ENCODE measurements at regions of chr2 and their contacts with region 1.

Region 1: GRCh38 chr2:170715062-170715931 is at the start of gene SP5:
- DNase-seq: peak; percentile 85
- H3K4me3 ChIP-seq: peak within 1 kb of the TSS; percentile 27 to 58 (median 50)
- H3K27ac ChIP-seq: peak within 1 kb of the TSS; percentile 25 to 61 (median 50)
- H3K4me1 ChIP-seq: peaks cover 0 to 55% (median 48%) of the 10 kb centered on the region in 4 donors
- H3K27me3 ChIP-seq: peaks cover 47 to 97% (median 80%) of the 10 kb centered on the region in 3 donors
- CTCF ChIP-seq: no peak
- EP300 ChIP-seq: no peak
- POLR2A ChIP-seq: no peak
- total RNA-seq, gene SP5: 0.81 to 4.6 (median 2.0) TPM

Region 2: GRCh38 chr2:170191166-170191866 is 524.0 kb before region 1 on chr2:
- intact Hi-C with region 1: no loop called
- DNase-seq: no peak
- H3K4me3 ChIP-seq: no peak overlapping the region
- H3K27ac ChIP-seq: no peak overlapping the region
- H3K4me1 ChIP-seq: no peaks in the 10 kb centered on the region
- H3K27me3 ChIP-seq: no peaks in the 10 kb centered on the region
- CTCF ChIP-seq: no peak
- EP300 ChIP-seq: no peak
- POLR2A ChIP-seq: no peak

Region 3: DNA sequence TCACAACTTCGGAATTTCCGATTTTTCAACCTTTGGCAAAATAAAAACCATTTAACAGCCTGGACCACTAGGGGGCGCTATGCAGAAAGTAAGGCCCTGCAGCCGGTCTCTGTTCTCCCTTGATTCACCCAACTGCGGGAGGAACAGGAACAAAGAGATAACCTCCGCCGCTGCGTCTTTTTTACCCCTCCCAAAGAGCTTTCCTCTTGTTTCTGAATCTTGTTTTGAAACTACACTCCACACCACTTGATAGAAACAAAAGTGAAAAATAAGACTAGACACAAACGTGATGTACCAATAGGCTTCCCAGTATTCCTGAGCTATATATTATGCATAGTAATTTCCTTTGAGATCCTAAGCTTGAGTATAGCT is 306.1 kb before region 1 on chr2:
- intact Hi-C with region 1: loop called (anchors 2 kb)
- DNase-seq: peak; percentile 84
- H3K4me3 ChIP-seq: no peak overlapping the region
- H3K27ac ChIP-seq: no peak overlapping the region
- H3K4me1 ChIP-seq: peaks cover 0 to 6% (median 4%) of the 10 kb centered on the region in 4 donors
- H3K27me3 ChIP-seq: peaks cover 0 to 10% (median 0%) of the 10 kb centered on the region in 3 donors
- CTCF ChIP-seq: peak; percentile 43 to 81 (median 74)
- EP300 ChIP-seq: no peak
- POLR2A ChIP-seq: no peak

Region 4: DNA sequence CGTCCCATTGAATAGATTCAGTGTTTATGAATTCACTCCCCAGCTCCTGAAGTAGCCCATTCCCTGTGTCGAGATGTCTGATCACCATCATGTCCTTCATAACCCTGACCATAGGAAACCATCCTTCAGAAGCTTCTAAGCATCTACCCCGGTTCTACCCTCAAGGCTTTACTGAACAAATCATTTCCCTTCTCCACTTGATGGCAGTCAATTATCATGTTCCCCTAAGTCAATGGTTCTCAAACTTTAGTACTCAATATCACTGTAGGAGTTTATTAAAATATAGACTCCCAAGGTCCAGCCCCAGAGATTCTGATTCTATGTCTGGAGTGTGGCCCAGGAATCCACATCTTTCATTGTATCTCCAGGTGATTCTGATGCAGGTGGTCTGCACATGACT is 228.6 kb before region 1 on chr2:
- intact Hi-C with region 1: no loop called
- DNase-seq: no peak
- H3K4me3 ChIP-seq: no peak overlapping the region
- H3K27ac ChIP-seq: no peak overlapping the region
- H3K4me1 ChIP-seq: no peaks in the 10 kb centered on the region
- H3K27me3 ChIP-seq: no peaks in the 10 kb centered on the region
- CTCF ChIP-seq: no peak
- EP300 ChIP-seq: no peak
- POLR2A ChIP-seq: no peak

Region 5: DNA sequence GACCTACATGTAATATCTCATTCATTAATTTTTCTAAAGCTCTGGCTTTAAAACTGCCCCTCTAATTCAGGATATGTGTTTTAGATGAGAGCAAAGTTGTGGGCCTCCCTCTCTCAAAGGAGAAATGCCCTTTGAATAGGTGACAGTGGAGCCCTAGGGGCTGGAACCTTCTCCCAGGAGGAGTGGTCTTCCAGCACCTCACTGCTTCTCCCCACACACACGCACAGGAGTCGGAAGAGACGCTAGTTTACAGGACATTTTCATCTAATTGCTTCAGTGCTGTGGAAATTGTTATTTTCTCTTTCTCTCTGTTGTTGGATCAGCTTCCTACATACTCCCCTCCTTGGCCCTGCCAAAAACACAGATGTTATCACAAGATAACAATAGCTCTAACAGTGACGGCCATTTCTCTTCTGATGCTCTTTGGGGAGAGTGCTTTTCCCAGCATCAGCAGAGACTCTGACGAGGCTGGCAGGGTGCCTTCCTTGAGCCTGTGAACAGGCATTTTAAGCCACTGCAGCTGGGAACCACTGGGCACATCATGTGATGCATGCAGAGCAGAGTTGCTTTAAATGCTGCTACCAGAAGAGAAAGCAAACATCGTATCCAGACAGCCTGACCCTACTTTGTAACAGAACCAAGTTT is 209.5 kb before region 1 on chr2:
- intact Hi-C with region 1: loop called (anchors 5 kb)
- DNase-seq: peak; percentile 94
- H3K4me3 ChIP-seq: peak overlapping the region in 3 of 4 donors; percentile 0 to 22 (median 4)
- H3K27ac ChIP-seq: peak overlapping the region; percentile 27 to 70 (median 44)
- H3K4me1 ChIP-seq: peaks cover 0 to 41% (median 20%) of the 10 kb centered on the region in 4 donors
- H3K27me3 ChIP-seq: no peaks in the 10 kb centered on the region
- CTCF ChIP-seq: no peak
- EP300 ChIP-seq: no peak
- POLR2A ChIP-seq: no peak

Region 6: GRCh38 chr2:170598067-170598395 is 117.3 kb before region 1 on chr2:
- intact Hi-C with region 1: loop called (anchors 5 kb)
- DNase-seq: peak; percentile 81
- H3K4me3 ChIP-seq: no peak overlapping the region
- H3K27ac ChIP-seq: peak overlapping the region; percentile 22 to 61 (median 38)
- H3K4me1 ChIP-seq: peaks cover 0 to 24% (median 6%) of the 10 kb centered on the region in 4 donors
- H3K27me3 ChIP-seq: no peaks in the 10 kb centered on the region
- CTCF ChIP-seq: no peak
- EP300 ChIP-seq: no peak
- POLR2A ChIP-seq: no peak

Region 7: DNA sequence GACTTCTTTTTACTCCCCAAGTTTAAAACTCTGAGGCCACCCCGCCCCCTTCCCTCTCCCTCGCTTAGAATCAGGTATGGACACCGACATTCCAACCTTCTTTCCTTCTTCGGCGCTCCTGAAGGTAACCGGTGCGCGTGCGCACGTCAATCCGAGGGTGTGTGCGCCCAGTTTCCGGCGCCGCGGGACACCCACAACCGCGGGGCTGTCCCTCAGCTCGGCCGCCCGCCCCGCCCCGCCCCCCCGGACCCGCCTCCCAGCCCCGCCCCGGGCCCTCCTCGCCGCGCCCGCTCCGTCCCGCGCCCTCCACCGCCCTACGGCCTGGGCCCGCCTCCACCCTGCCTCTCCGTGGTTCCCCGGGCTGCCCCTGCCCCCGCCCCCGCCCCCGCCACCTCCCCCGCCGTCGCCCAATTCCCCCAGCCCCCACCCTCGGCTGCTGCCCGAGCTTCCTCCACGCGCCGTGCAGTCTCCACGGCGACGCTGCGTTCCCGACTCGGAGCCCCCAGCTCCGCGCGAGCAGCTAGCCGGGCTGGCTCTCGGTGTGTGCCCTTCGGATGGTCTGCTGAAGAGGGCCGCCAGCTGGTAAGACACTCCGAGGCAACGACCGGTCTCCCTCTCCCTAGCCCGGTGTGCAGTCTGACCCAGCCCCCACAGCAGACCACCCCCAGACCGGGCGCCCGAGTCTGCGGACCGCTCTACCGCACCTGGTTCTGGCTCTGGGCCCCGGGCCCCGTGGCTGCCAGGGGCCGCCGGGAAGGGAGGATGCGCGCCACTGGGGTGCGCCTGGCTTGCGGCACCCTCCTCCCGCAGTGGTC is 55.5 kb after region 1 on chr2:
- intact Hi-C with region 1: loop called (anchors 2 kb)
- DNase-seq: peak; percentile 88
- H3K4me3 ChIP-seq: peak overlapping the region; percentile 69 to 74 (median 71)
- H3K27ac ChIP-seq: peak overlapping the region; percentile 74 to 84 (median 79)
- H3K4me1 ChIP-seq: peaks cover 0 to 17% (median 8%) of the 10 kb centered on the region in 4 donors
- H3K27me3 ChIP-seq: no peaks in the 10 kb centered on the region
- CTCF ChIP-seq: no peak
- EP300 ChIP-seq: no peak
- POLR2A ChIP-seq: no peak